PC-3 (cell line): ENCODE measurements at regions of chr5 and their contacts with region 1.

Region 1: DNA sequence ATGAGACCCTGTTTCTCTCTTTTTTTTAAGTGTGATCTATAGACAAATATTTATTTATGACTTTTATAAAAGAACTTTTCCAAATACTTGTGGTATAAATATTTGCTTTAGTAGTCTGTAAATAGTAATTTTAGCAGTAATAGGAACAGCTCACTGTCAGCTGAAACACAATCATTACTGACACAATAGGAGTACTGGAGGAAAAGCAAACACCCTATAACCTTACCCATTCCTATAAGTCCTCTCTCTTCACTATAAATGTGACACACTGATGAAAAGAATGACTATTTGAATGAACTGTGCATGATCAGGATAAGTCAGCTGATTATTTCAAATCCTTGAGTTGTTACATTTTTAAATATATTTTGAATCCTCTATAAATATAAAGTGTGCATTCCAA is 72.4 kb downstream of the CDH12 start:
- DNase-seq: peak; percentile 17
- ATAC-seq: peak; percentile 99
- H3K4me3 ChIP-seq: no peak overlapping the region
- H3K27ac ChIP-seq: no peak overlapping the region
- H3K4me1 ChIP-seq: no peaks in the 10 kb centered on the region
- H3K27me3 ChIP-seq: no peaks in the 10 kb centered on the region
- CTCF ChIP-seq: no peak

Region 2: GRCh38 chr5:22648786-22649446 is 131.8 kb before region 1 on chr5:
- CTCF ChIA-PET with region 1: no interaction called
- POLR2A ChIA-PET with region 1: no interaction called
- intact Hi-C with region 1: loop called (anchors 1 kb)
- DNase-seq: peak; percentile 85
- ATAC-seq: peak; percentile 98
- H3K4me3 ChIP-seq: no peak overlapping the region
- H3K27ac ChIP-seq: peak overlapping the region; percentile 64
- H3K4me1 ChIP-seq: peaks cover 8% of the 10 kb centered on the region; the same call in 1 of the 2 replicates
- H3K27me3 ChIP-seq: no peaks in the 10 kb centered on the region
- CTCF ChIP-seq: no peak

Region 3: GRCh38 chr5:22835686-22836085 is 54.9 kb after region 1 on chr5:
- CTCF ChIA-PET with region 1: no interaction called
- POLR2A ChIA-PET with region 1: no interaction called
- intact Hi-C with region 1: loop called (anchors 5 kb)
- DNase-seq: peak; percentile 49
- ATAC-seq: peak; percentile 88
- H3K4me3 ChIP-seq: no peak overlapping the region
- H3K27ac ChIP-seq: no peak overlapping the region
- H3K4me1 ChIP-seq: no peaks in the 10 kb centered on the region
- H3K27me3 ChIP-seq: no peaks in the 10 kb centered on the region
- CTCF ChIP-seq: no peak

Region 4: DNA sequence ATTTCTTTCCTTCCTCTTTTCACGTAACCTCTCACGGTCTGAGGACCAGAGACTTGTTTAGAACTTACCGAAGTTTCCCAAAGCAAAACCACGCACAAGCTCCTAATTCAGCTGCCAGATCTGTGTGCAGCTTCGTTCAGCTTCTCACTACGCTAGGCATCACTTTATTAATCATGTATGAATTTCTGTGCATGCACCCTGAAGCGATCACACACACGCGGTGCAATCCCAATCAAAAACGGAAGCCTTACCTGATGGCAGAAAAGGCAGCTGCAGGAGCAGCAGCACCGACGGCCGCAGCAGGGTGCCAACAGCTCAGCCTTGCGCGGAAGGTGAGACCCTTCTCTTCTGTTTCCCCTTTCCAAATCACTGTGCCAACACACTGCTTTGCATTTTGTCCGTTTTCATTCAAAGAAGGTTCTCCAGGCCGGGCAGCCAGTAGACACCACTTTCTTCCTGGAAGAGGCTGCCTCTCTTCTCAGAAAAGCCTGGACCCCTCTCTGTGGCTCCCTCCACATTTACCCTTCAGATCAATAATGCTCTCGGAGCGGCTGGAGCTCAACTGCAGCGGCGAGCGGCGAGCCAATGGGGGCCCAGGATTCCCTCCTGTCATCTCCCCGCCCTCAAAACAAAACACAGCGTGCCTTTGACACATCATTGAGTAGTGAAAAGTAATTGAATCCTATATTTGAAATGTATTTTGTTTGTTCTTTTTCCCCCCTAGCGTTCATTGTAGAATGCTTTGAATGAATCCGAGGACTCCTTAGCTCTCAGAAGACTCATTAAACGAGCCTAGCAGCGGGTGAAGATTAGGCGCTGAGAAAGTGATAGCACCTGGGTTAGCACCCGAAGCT is 72.3 kb after region 1 on chr5 and contains the start of gene CDH12:
- CTCF ChIA-PET with region 1: no interaction called
- POLR2A ChIA-PET with region 1: no interaction called
- intact Hi-C with region 1: loop called (anchors 5 kb)
- DNase-seq: peak; percentile 25
- ATAC-seq: peak; percentile 84
- H3K4me3 ChIP-seq: peak within 1 kb of the TSS; percentile 67
- H3K27ac ChIP-seq: no peak within 1 kb of the TSS
- H3K4me1 ChIP-seq: peaks cover 12% of the 10 kb centered on the region; the same call in 1 of the 2 replicates
- H3K27me3 ChIP-seq: peaks cover 17% of the 10 kb centered on the region; the same call in 1 of the 2 replicates
- CTCF ChIP-seq: no peak
- total RNA-seq, gene CDH12: 0.44 TPM in 1 of 2 replicates, not detected in the other

Region 5: GRCh38 chr5:22908129-22908528 is 127.4 kb after region 1 on chr5:
- CTCF ChIA-PET with region 1: no interaction called
- POLR2A ChIA-PET with region 1: no interaction called
- intact Hi-C with region 1: no loop called
- DNase-seq: peak; percentile 25
- ATAC-seq: no peak
- H3K4me3 ChIP-seq: no peak overlapping the region
- H3K27ac ChIP-seq: no peak overlapping the region
- H3K4me1 ChIP-seq: no peaks in the 10 kb centered on the region
- H3K27me3 ChIP-seq: no peaks in the 10 kb centered on the region
- CTCF ChIP-seq: no peak